ENCODE measurements at regions of chr9 and their contacts with region 1.

Region 1: DNA sequence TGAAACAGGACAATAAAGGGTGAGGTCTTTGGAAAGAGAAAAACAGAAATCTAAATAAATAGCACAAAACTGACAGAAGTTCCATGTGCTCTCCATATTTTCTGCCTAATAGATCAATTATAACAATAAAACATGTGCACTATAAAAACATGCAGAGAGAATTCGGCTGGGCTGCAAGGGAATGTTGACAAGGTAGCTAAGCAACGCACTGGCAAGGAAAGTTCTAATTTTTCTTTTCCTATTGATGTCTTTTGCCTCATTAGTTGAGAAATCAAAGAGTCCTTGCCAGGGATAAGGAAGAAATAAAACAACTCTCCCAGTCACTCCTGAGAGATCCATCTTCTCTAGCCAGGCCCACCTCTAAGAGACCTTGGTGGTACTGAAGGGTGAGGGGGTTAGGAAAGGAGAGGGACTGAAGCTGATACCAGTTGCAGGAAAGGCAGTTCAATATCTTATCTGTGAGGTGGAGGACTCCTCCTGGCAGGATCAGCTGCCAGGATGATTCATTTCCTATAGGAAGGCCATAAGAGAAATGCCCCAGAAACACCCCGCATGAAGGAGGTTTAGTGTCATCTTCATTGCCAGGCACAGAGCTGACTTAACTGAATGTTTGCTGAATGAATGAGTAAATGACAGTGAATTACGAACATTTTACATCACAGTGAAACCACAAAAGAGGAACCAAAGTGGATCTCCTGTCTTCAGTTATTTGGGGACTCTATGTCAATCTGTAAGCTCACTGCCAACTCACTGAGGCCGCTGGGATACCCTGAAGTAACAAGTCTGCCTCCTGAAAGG is 63.7 kb upstream of the IFNK start:
- DNase-seq: peak; percentile 68
- H3K4me3 ChIP-seq: no peak overlapping the region
- H3K27ac ChIP-seq: peak overlapping the region; percentile 63
- H3K4me1 ChIP-seq: peaks cover 29% of the 10 kb centered on the region
- H3K27me3 ChIP-seq: no peaks in the 10 kb centered on the region
- CTCF ChIP-seq: no peak

Region 2: GRCh38 chr9:27407986-27408385 is 52.4 kb before region 1 on chr9:
- CTCF ChIA-PET with region 1: no interaction called
- dilution Hi-C with region 1: no loop called
- in situ Hi-C with region 1: no loop called
- intact Hi-C with region 1: loop called (anchors 5 kb)
- DNase-seq: no peak
- H3K4me3 ChIP-seq: no peak overlapping the region
- H3K27ac ChIP-seq: peak overlapping the region; percentile 16
- H3K4me1 ChIP-seq: peaks cover 26% of the 10 kb centered on the region
- H3K27me3 ChIP-seq: no peaks in the 10 kb centered on the region
- CTCF ChIP-seq: no peak

Region 3: DNA sequence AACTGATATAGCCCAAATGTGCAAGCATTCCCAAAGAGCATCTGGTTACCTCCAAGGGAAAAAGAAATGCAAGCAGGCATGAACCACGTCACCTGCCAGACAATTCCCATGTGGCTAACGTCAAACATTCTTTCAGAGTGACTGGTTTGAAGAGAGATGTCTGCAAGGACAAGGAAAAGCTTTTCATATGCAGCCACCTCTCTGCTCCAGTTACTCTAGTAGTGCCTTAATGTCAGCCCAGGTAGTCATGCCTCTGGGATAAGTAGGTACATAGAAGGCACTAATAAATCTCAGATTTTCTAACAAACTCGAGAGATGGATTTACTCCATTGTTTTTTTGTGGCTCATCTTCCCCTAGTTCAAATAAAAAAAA is 33.2 kb before region 1 on chr9:
- CTCF ChIA-PET with region 1: no interaction called
- dilution Hi-C with region 1: no loop called
- in situ Hi-C with region 1: no loop called
- intact Hi-C with region 1: no loop called
- DNase-seq: peak; percentile 88
- H3K4me3 ChIP-seq: peak overlapping the region in 1 of 3 experiments; percentile 37
- H3K27ac ChIP-seq: peak overlapping the region; percentile 86
- H3K4me1 ChIP-seq: peaks cover 80% of the 10 kb centered on the region
- H3K27me3 ChIP-seq: no peaks in the 10 kb centered on the region
- CTCF ChIP-seq: no peak

Region 4: GRCh38 chr9:27447031-27447683 is 13.3 kb before region 1 on chr9:
- CTCF ChIA-PET with region 1: no interaction called
- dilution Hi-C with region 1: no loop called
- in situ Hi-C with region 1: no loop called
- intact Hi-C with region 1: loop called (anchors 2 kb)
- DNase-seq: no peak
- H3K4me3 ChIP-seq: no peak overlapping the region
- H3K27ac ChIP-seq: no peak overlapping the region
- H3K4me1 ChIP-seq: peaks cover 10% of the 10 kb centered on the region
- H3K27me3 ChIP-seq: no peaks in the 10 kb centered on the region
- CTCF ChIP-seq: no peak